Prostate gland (tissue), 2 donors: ENCODE measurements at regions of chr10 and their contacts with region 1.

Region 1: GRCh38 chr10:59240582-59241183 is 64.2 kb downstream of the PHYHIPL start:
- DNase-seq: peak; percentile 12
- H3K4me3 ChIP-seq: no peak overlapping the region
- H3K27ac ChIP-seq: peak overlapping the region; percentile 12 to 41
- H3K4me1 ChIP-seq: no peaks in the 10 kb centered on the region
- H3K27me3 ChIP-seq: no peaks in the 10 kb centered on the region
- CTCF ChIP-seq: peak; percentile 56 to 90 (median 80)
- POLR2A ChIP-seq: no peak

Region 2: DNA sequence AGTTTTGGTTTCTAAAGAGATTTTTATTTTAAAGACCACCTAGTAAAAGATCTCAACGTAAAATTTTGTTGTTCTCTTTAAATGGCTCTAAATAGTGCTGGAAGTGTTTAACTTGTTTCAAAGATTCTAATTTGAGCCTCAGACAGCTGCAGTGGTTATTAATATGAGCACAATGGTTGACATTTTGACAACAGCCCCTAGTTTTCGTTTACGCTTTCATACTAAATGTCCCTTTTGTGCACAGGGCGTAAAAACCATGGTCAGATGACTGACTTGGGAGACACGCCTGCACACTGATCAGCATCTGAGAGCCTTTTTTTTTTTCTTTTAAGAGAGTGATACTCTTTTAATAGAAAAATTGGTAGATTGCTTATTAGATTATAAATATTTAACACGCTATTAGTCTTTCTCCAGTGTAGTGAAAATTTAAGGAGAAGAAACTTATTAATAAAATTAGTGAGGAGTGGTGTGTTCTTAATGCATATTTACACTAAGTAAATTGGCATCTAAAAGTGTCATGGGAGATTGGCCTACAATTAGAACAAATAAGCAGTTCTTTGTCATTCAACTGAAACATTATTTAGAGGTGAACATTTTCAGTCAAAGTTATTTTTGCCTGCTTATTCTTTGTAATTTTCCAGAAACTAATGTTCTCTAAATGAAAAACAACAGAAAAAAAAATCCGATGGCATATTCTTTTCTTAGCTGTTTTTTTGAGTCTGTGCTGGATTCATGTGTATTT is 247.0 kb before region 1 on chr10:
- intact Hi-C with region 1: no loop called
- DNase-seq: no peak
- H3K4me3 ChIP-seq: no peak overlapping the region
- H3K27ac ChIP-seq: peak overlapping the region in 1 of 2 donors; percentile 1
- H3K4me1 ChIP-seq: no peaks in the 10 kb centered on the region
- H3K27me3 ChIP-seq: no peaks in the 10 kb centered on the region
- CTCF ChIP-seq: no peak
- POLR2A ChIP-seq: no peak

Region 3: GRCh38 chr10:59133841-59134593 is 106.7 kb before region 1 on chr10:
- intact Hi-C with region 1: no loop called
- DNase-seq: no peak
- H3K4me3 ChIP-seq: no peak overlapping the region
- H3K27ac ChIP-seq: no peak overlapping the region
- H3K4me1 ChIP-seq: no peaks in the 10 kb centered on the region
- H3K27me3 ChIP-seq: no peaks in the 10 kb centered on the region
- CTCF ChIP-seq: no peak
- POLR2A ChIP-seq: no peak

Region 4: DNA sequence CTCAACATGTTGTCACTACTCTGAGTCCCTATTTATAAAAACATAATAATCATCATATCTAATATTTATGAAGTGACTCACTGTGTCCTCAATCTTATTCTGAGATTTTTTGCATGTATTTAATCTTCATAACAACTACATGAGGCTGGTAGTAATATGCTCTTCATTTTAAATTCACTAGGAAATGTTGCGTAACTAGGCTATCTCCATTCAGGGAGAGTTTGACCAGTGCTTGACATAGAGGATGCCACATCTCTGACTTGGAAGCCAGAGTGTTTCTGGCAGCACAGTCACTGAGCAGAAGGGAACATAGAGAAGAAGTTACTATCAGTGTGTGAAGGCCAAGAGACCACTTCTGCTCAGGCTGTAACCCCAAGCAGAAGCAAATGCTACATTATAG is 32.8 kb after region 1 on chr10:
- intact Hi-C with region 1: no loop called
- DNase-seq: no peak
- H3K4me3 ChIP-seq: no peak overlapping the region
- H3K27ac ChIP-seq: peak overlapping the region in 1 of 2 donors; percentile 30
- H3K4me1 ChIP-seq: peaks cover 6% of the 10 kb centered on the region
- H3K27me3 ChIP-seq: no peaks in the 10 kb centered on the region
- CTCF ChIP-seq: no peak
- POLR2A ChIP-seq: no peak

Region 5: DNA sequence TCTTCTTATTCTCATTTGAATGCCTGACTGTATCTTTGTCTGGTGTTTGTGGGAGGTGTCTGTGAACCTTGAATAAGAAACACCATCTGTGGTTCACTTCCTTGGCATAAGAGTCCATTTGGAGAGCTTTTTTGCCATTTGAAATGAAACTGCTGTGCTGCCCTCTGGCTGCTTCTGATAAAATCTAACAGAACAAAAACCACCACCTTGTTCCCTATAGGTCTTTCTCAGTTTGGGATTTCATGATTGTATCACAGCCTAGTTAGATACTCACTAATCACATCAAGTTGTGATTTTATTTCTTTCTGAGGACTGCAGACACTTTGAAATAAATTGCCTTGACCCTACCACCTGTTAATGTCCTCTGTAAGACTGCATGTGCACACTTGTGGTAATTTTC is 224.4 kb after region 1 on chr10:
- intact Hi-C with region 1: loop called (anchors 10 kb)
- DNase-seq: no peak
- H3K4me3 ChIP-seq: no peak overlapping the region
- H3K27ac ChIP-seq: no peak overlapping the region
- H3K4me1 ChIP-seq: no peaks in the 10 kb centered on the region
- H3K27me3 ChIP-seq: no peaks in the 10 kb centered on the region
- CTCF ChIP-seq: peak in 3 of 4 experiments; percentile 35 to 71 (median 43)
- POLR2A ChIP-seq: no peak

Region 6: DNA sequence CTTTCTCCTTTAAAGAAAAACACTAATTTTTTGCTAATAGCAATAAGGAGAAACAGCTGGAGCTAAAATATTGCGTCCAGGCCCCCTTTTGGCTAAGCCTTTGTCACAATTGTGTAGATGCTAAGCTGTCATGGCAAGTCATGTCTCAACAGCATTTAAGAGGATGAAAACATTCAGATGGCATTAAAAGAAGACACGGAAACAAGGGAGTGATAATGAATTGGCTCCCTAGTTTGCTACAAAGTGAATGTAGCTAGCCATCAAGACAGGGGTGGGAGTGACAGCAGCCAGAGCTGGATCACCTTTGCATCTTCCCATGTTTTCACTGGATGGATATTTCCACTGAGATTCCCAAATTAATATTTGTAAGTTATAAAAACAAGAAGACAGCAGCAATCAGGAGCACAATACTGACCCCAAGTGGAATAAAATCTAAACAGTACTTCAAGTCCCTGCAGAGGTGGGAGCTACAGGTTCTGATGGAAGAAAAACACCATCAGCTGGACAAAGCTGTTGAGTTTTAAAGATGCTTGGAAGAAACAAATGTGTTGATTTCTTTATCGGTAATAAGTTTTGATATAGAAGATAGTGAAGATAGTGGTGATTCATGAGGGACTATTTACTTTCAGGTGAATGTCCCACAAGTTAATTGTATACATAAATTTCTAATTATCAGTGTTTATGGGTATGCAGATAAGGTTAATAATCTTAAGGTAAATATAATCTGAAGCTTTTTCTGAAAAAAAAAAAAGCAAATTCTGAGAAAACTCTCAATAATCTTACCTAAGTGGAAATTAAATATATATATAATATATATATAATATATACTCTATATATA is 339.6 kb after region 1 on chr10:
- intact Hi-C with region 1: loop called (anchors 2 kb)
- DNase-seq: no peak
- H3K4me3 ChIP-seq: no peak overlapping the region
- H3K27ac ChIP-seq: no peak overlapping the region
- H3K4me1 ChIP-seq: no peaks in the 10 kb centered on the region
- H3K27me3 ChIP-seq: no peaks in the 10 kb centered on the region
- CTCF ChIP-seq: peak in 3 of 4 experiments; percentile 25 to 45 (median 29)
- POLR2A ChIP-seq: no peak

Region 7: DNA sequence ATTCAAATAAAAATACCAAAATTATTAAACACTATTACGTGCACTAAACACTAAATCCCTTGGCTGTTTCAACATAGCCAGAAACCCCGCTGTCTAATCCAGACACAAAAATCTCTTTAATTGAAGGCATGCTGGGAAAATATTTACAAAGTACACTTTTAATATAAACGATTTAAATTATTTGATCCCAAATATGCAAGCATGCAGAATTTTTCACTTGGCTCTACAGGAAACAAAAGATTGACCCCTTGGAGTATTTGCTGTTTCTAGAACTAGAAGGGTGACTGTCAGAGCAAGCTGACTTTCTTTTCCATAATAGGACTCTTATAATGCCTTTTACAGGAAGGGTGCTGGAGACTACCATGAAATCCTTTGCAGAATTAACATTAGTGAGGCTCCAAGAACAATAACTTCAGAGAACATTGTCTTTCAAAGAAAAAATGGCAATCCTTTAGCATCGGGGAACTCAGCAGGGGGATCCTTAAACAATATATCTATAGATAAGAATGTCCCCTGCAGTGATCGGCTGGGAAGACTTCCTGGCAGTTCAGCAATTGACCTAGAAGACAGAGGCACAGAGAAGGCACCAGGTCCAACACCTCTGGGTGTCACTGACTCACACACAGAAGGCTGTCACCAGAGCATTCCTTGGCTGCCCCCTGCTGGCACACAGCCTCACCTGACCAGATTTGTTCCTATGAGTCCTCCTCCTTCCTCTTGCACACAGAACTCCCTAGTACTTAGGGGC is 568.4 kb after region 1 on chr10:
- intact Hi-C with region 1: loop called (anchors 10 kb)
- DNase-seq: peak; percentile 64
- H3K4me3 ChIP-seq: no peak overlapping the region
- H3K27ac ChIP-seq: no peak overlapping the region
- H3K4me1 ChIP-seq: no peaks in the 10 kb centered on the region
- H3K27me3 ChIP-seq: no peaks in the 10 kb centered on the region
- CTCF ChIP-seq: peak in 3 of 4 experiments; percentile 63 to 69 (median 67)
- POLR2A ChIP-seq: no peak